Naive thymus-derived CD4-positive, alpha-beta T cell (primary cell): ENCODE measurements at regions of chr12 and their contacts with region 1.

Region 1: DNA sequence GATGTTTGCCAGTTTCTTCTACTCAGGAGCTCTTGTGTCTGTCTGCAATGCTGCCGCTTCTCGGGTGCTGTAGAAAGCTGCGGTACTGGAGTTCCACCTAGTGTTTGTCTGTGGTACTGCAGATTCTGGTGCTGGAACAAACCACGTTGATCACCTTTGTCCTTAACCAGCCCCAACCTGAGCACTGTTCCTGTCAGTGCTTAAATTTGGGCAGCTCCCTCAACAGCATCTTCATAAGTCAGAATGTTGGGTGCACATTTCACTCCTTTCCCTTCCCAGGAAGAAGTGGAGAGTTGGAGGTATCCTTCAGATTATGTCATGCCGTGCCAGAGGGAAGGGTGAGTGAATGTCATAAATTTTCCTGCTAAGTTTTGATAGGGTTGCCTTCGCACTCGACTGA is 48.7 kb upstream of the LALBA start:
- DNase-seq: peak; percentile 27 to 82 (median 75)
- ATAC-seq: peak; percentile 97
- H3K4me3 ChIP-seq: no peak overlapping the region
- H3K4me3 Mint-ChIP-seq: no peak overlapping the region
- H3K27ac ChIP-seq: no peak overlapping the region
- H3K27ac Mint-ChIP-seq: no peak overlapping the region
- H3K4me1 ChIP-seq: no peaks in the 10 kb centered on the region
- H3K4me1 Mint-ChIP-seq: peaks cover 0 to 5% (median 0%) of the 10 kb centered on the region in 7 donors
- H3K27me3 ChIP-seq: no peaks in the 10 kb centered on the region
- H3K27me3 Mint-ChIP-seq: peaks cover 24 to 44% (median 29%) of the 10 kb centered on the region in 5 donors

Region 2: DNA sequence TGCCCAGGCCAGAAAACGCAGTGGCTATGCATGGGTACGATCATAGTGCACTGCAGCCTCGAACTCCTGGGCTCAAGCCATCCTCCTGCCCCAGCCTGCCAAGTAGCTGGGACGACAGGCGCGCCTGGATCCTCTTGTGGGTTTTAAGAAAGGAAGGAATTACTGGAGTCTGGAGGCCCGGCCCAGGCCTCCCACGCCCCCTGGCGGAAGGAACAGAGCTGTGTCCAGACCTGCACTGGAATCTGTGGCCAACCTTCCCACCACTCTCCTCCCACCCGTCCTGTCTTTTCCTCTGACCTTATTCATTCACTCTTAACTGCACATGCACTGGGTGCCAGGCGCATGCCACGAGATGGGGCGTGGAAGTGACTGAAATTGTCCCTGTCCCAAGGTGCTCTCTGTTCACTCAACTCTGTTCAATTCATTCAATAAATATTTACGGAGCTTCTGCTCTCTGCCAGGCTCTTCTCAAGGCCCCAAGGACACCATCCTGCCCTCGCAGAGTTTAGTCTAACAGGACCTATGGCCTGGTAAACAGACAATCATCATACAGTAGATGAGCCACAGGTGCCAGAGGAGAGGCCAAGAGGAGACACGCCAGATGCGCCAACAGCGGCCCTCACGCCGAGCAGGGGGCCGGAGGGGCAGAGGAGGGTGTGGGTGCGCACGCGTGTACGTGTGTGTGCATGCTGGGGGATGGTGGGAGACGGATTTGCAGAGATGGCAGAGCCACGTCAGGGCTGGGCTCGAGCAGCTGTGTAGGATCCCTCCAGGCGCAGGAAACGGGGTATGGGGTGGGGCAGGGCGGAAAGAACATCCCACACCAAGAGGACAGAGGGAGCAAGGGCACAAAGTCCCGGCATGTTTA is 668.9 kb before region 1 on chr12:
- CTCF ChIA-PET with region 1: no interaction called
- POLR2A ChIA-PET with region 1: no interaction called
- intact Hi-C with region 1: loop called (anchors 2 to 5 kb)
- DNase-seq: peak in 7 of 9 donors; percentile 22 to 67 (median 45)
- ATAC-seq: peak; percentile 72
- H3K4me3 ChIP-seq: no peak overlapping the region
- H3K4me3 Mint-ChIP-seq: no peak overlapping the region
- H3K27ac ChIP-seq: no peak overlapping the region
- H3K27ac Mint-ChIP-seq: peak overlapping the region in 1 of 9 donors; percentile 38
- H3K4me1 ChIP-seq: no peaks in the 10 kb centered on the region
- H3K4me1 Mint-ChIP-seq: peaks cover 0 to 18% (median 0%) of the 10 kb centered on the region in 7 donors
- H3K27me3 ChIP-seq: no peaks in the 10 kb centered on the region
- H3K27me3 Mint-ChIP-seq: peaks cover 4 to 13% (median 5%) of the 10 kb centered on the region in 5 donors

Region 3: GRCh38 chr12:48165094-48165981 is 453.2 kb before region 1 on chr12:
- CTCF ChIA-PET with region 1: no interaction called
- POLR2A ChIA-PET with region 1: no interaction called
- intact Hi-C with region 1: loop called in 1 of 2 experiments (anchors 1 kb)
- DNase-seq: peak in 7 of 9 donors; percentile 54 to 77 (median 70)
- ATAC-seq: peak; percentile 87
- H3K4me3 ChIP-seq: no peak overlapping the region
- H3K4me3 Mint-ChIP-seq: no peak overlapping the region
- H3K27ac ChIP-seq: no peak overlapping the region
- H3K27ac Mint-ChIP-seq: no peak overlapping the region
- H3K4me1 ChIP-seq: no peaks in the 10 kb centered on the region
- H3K4me1 Mint-ChIP-seq: peaks cover 2 to 16% (median 14%) of the 10 kb centered on the region in 7 donors
- H3K27me3 ChIP-seq: no peaks in the 10 kb centered on the region
- H3K27me3 Mint-ChIP-seq: peaks cover 0 to 33% (median 12%) of the 10 kb centered on the region in 5 donors

Region 4: GRCh38 chr12:48197971-48198671 is 420.4 kb before region 1 on chr12:
- CTCF ChIA-PET with region 1: interaction called, 3 read pairs
- POLR2A ChIA-PET with region 1: no interaction called
- intact Hi-C with region 1: loop called in 1 of 2 experiments (anchors 2 kb)
- DNase-seq: peak; percentile 75 to 88 (median 86)
- ATAC-seq: peak; percentile 97
- H3K4me3 ChIP-seq: peak overlapping the region; percentile 89
- H3K4me3 Mint-ChIP-seq: peak overlapping the region; percentile 83 to 96 (median 92)
- H3K27ac ChIP-seq: peak overlapping the region; percentile 98
- H3K27ac Mint-ChIP-seq: peak overlapping the region; percentile 94 to 99 (median 96)
- H3K4me1 ChIP-seq: peaks cover 28% of the 10 kb centered on the region in 2 donors
- H3K4me1 Mint-ChIP-seq: peaks cover 31 to 53% (median 48%) of the 10 kb centered on the region in 7 donors
- H3K27me3 ChIP-seq: no peaks in the 10 kb centered on the region
- H3K27me3 Mint-ChIP-seq: peaks cover 0 to 28% (median 0%) of the 10 kb centered on the region in 5 donors

Region 5: DNA sequence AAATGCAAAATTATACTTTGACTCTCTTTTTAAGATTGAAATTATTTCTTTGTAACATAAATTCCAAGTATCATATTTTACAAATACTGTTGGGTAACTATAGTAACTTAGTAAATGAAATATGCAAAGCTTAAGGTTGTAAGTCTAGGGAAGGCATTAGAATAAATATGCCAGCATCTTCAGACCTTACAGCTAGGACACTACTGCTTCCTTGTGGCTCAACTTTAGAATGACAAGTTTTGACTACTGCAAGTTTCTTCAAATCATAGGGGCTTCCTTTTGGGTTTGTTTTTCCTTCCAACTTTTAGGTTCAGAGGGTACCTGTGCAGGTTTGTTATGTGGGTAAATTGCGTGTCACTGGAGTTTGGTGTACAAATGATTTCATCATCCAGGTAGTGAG is 163.9 kb before region 1 on chr12:
- CTCF ChIA-PET with region 1: no interaction called
- POLR2A ChIA-PET with region 1: no interaction called
- intact Hi-C with region 1: loop called in 1 of 2 experiments (anchors 1 kb)
- DNase-seq: peak in 7 of 9 donors; percentile 13 to 57 (median 32)
- ATAC-seq: peak; percentile 73
- H3K4me3 ChIP-seq: no peak overlapping the region
- H3K4me3 Mint-ChIP-seq: no peak overlapping the region
- H3K27ac ChIP-seq: no peak overlapping the region
- H3K27ac Mint-ChIP-seq: no peak overlapping the region
- H3K4me1 ChIP-seq: no peaks in the 10 kb centered on the region
- H3K4me1 Mint-ChIP-seq: no peaks in the 10 kb centered on the region
- H3K27me3 ChIP-seq: no peaks in the 10 kb centered on the region
- H3K27me3 Mint-ChIP-seq: peaks cover 0 to 18% (median 8%) of the 10 kb centered on the region in 5 donors

Region 6: GRCh38 chr12:48890657-48891418 is 272.3 kb after region 1 on chr12:
- CTCF ChIA-PET with region 1: no interaction called
- POLR2A ChIA-PET with region 1: no interaction called
- intact Hi-C with region 1: no loop called
- DNase-seq: peak; percentile 51 to 79 (median 64)
- ATAC-seq: peak; percentile 97
- H3K4me3 ChIP-seq: no peak overlapping the region
- H3K4me3 Mint-ChIP-seq: peak overlapping the region in 4 of 10 donors; percentile 2 to 39 (median 16)
- H3K27ac ChIP-seq: no peak overlapping the region
- H3K27ac Mint-ChIP-seq: peak overlapping the region in 1 of 9 donors; percentile 65
- H3K4me1 ChIP-seq: peaks cover 8% of the 10 kb centered on the region in 2 donors
- H3K4me1 Mint-ChIP-seq: peaks cover 0 to 10% (median 0%) of the 10 kb centered on the region in 7 donors
- H3K27me3 ChIP-seq: peaks cover 0 to 4% of the 10 kb centered on the region in 2 donors
- H3K27me3 Mint-ChIP-seq: peaks cover 12 to 30% (median 15%) of the 10 kb centered on the region in 5 donors

Region 7: DNA sequence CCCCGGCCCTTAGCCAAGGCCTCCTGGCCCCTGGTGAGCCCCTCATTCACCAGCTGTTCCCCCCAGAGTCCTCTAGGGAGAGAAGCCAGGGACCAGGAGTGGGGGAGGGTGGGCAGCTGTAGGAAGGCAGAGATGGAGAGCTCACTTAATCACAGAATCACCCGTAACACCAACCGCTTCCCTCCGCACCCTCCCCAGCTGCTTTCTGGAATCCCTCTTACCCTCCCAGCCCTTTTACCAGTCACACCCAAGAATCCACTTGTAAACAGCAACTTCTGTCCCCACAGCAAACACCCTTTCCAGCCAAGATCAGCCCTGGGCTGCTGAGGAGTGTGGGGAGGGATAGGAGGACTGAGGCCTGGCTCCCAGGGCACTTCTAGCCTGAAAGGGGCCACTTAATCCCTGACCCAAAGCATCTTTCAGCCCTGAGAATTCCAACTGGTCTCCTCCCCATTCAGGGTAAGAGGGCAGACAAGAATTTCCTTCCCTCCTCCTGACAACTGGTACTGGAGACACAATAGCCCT is 1190.9 kb after region 1 on chr12:
- CTCF ChIA-PET with region 1: no interaction called
- POLR2A ChIA-PET with region 1: no interaction called
- intact Hi-C with region 1: no loop called
- DNase-seq: no peak
- ATAC-seq: no peak
- H3K4me3 ChIP-seq: no peak overlapping the region
- H3K4me3 Mint-ChIP-seq: no peak overlapping the region
- H3K27ac ChIP-seq: no peak overlapping the region
- H3K27ac Mint-ChIP-seq: no peak overlapping the region
- H3K4me1 ChIP-seq: no peaks in the 10 kb centered on the region
- H3K4me1 Mint-ChIP-seq: peaks cover 0 to 8% (median 4%) of the 10 kb centered on the region in 7 donors
- H3K27me3 ChIP-seq: no peaks in the 10 kb centered on the region
- H3K27me3 Mint-ChIP-seq: no peaks in the 10 kb centered on the region